ENCODE measurements at regions of chr2 and their contacts with region 1.

Region 1: GRCh38 chr2:85728883-85729824 is 24.6 kb upstream of the ATOH8 start:
- DNase-seq: peak; percentile 80
- ATAC-seq: peak; percentile 88
- H3K4me3 ChIP-seq: no peak overlapping the region
- H3K4me3 Mint-ChIP-seq: no peak overlapping the region
- H3K27ac ChIP-seq: no peak overlapping the region
- H3K27ac Mint-ChIP-seq: no peak overlapping the region
- H3K4me1 ChIP-seq: peaks cover 3 to 7% of the 10 kb centered on the region in 2 donors
- H3K4me1 Mint-ChIP-seq: no peaks in the 10 kb centered on the region
- H3K27me3 ChIP-seq: peaks cover 0 to 10% (median 3%) of the 10 kb centered on the region in 4 experiments
- H3K27me3 Mint-ChIP-seq: peaks cover 23% of the 10 kb centered on the region
- CTCF ChIP-seq: peak; percentile 96

Region 2: DNA sequence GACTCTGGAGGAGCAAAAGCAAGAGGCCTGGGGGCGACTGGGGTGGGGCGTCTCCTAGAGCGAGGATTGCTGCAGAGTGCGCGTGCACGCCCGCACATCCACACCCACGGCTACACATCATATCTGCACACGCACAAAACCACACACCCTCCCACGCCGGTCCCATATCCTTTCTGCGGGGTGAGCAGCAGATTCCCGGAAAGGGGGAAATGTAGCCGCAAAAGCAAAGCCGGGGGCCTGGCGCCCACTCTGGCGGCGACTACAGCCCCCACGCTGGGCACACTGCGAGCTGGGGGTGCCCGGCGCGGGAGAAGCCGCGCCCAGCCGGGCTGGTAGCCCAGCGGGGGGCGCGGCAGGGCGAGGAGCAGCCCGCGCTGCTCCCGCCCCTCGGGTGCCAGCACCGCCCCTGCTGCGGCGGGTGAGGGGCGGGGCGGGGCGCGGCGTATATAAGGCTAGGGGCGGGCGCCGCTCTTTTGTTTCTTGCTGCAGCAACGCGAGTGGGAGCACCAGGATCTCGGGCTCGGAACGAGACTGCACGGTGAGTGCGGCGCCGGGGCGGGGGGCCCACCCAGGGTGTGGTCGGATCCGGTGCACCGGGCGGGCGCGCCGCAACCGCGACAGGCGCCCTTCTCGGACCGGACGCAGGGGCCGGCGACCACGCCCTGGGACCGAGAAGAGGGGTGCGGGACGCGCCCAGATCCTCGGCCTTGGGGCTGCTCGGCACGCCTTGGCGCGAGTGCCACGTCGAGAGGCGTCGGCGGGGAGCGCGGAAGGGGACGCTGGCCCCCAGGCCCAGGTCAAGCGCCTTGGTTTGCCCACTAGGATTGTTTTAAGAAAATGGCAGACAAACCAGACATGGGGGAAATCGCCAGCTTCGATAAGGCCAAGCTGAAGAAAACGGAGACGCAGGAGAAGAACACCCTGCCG is 823.7 kb before region 1 on chr2 and contains the start of gene TMSB10:
- CTCF ChIA-PET with region 1: no interaction called
- POLR2A ChIA-PET with region 1: no interaction called
- intact Hi-C with region 1: no loop called
- DNase-seq: peak; percentile 94
- ATAC-seq: peak; percentile 84
- H3K4me3 ChIP-seq: peak within 1 kb of the TSS; percentile 67 to 98 (median 93)
- H3K4me3 Mint-ChIP-seq: peak within 1 kb of the TSS; percentile 87
- H3K27ac ChIP-seq: peak within 1 kb of the TSS; percentile 77 to 83
- H3K27ac Mint-ChIP-seq: peak within 1 kb of the TSS; percentile 94
- H3K4me1 ChIP-seq: peaks cover 41 to 46% of the 10 kb centered on the region in 2 donors
- H3K4me1 Mint-ChIP-seq: peaks cover 60% of the 10 kb centered on the region
- H3K27me3 ChIP-seq: no peaks in the 10 kb centered on the region
- H3K27me3 Mint-ChIP-seq: no peaks in the 10 kb centered on the region
- CTCF ChIP-seq: peak; percentile 6
- total RNA-seq, gene TMSB10: 868 and 885 TPM in 2 replicates

Region 3: DNA sequence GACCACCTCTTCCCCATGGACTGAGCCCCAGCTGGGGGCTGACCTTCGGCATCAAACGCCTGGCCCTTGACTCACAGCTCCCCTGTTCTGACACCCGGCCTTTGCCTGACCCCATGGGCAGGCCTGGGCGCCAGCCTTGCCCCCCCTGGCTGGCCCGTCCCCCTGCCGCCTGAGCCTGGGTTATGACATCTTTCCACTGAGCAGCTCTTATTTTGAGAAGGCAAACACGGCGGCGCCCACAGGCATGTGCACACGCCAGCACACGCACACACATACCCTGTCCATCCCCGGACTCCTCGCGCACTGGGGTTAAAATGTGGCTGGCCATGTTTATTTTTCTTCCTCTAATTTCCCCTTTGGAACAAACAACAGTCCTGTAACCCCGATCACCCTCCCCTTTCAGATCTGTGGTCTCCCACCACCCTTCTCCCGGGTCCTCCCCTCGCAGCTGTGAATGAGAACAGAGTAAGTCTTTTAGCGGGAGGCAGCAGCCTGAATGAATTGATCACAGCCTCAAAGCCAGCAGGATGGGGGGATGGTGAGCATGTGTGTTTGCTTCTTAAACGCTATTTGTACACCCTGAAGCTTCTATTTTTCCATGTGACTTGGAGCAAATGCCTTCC is 12.8 kb after region 1 on chr2:
- CTCF ChIA-PET with region 1: interaction called, 11 read pairs
- POLR2A ChIA-PET with region 1: no interaction called
- intact Hi-C with region 1: no loop called
- DNase-seq: no peak
- ATAC-seq: no peak
- H3K4me3 ChIP-seq: no peak overlapping the region
- H3K4me3 Mint-ChIP-seq: no peak overlapping the region
- H3K27ac ChIP-seq: no peak overlapping the region
- H3K27ac Mint-ChIP-seq: no peak overlapping the region
- H3K4me1 ChIP-seq: peaks cover 15% of the 10 kb centered on the region in 2 donors
- H3K4me1 Mint-ChIP-seq: peaks cover 20% of the 10 kb centered on the region
- H3K27me3 ChIP-seq: peaks cover 0 to 16% (median 8%) of the 10 kb centered on the region in 4 experiments
- H3K27me3 Mint-ChIP-seq: peaks cover 51% of the 10 kb centered on the region
- CTCF ChIP-seq: no peak

Region 4: GRCh38 chr2:85750587-85751575 is 21.7 kb after region 1 on chr2:
- CTCF ChIA-PET with region 1: interaction called, 13 read pairs
- POLR2A ChIA-PET with region 1: no interaction called
- intact Hi-C with region 1: no loop called
- DNase-seq: peak; percentile 67
- ATAC-seq: peak; percentile 29
- H3K4me3 ChIP-seq: no peak overlapping the region
- H3K4me3 Mint-ChIP-seq: peak overlapping the region; percentile 54
- H3K27ac ChIP-seq: no peak overlapping the region
- H3K27ac Mint-ChIP-seq: no peak overlapping the region
- H3K4me1 ChIP-seq: peaks cover 60 to 64% of the 10 kb centered on the region in 2 donors
- H3K4me1 Mint-ChIP-seq: peaks cover 59% of the 10 kb centered on the region
- H3K27me3 ChIP-seq: peaks cover 0 to 49% (median 21%) of the 10 kb centered on the region in 4 experiments
- H3K27me3 Mint-ChIP-seq: peaks cover 23% of the 10 kb centered on the region
- CTCF ChIP-seq: peak; percentile 70

Region 5: DNA sequence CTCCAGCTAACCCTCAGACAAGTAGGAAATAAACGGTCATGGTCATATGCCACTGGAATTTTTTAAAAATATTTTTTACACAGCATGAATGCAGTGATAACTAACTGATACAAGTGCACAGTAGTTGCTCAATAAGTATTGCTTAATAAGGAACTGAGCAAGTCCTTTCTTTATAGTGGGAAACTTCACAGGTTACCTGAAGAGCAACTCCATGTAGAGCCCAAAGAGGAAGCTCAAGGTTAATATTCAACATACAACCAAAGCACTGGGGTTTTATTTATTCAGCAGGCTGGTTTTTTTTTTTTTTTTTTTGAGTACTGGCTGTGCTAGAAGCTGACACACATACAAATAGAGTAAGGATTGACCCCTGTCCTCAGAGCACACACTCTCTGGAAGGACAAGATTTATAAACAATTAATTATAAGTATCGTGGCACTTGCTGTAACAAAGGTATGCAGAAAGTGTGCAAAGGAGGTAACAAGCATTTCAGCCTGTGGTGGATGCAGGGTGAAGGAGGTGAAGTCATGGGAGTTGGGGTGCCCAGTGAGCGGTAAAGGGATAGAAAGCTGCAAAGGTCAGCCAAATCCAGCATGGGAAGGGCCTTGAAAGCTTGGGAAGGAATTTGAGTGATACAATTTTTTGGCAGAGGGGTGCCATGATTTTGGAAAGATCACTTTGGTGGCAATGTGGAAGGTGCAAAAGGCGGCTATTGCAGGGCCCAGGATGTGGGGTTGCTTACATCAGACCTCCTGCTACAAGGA is 77.4 kb after region 1 on chr2:
- CTCF ChIA-PET with region 1: interaction called, 119 read pairs
- POLR2A ChIA-PET with region 1: no interaction called
- intact Hi-C with region 1: no loop called
- DNase-seq: no peak
- ATAC-seq: no peak
- H3K4me3 ChIP-seq: no peak overlapping the region
- H3K4me3 Mint-ChIP-seq: no peak overlapping the region
- H3K27ac ChIP-seq: no peak overlapping the region
- H3K27ac Mint-ChIP-seq: no peak overlapping the region
- H3K4me1 ChIP-seq: no peaks in the 10 kb centered on the region
- H3K4me1 Mint-ChIP-seq: peaks cover 6% of the 10 kb centered on the region
- H3K27me3 ChIP-seq: peaks cover 0 to 2% (median 1%) of the 10 kb centered on the region in 4 experiments
- H3K27me3 Mint-ChIP-seq: peaks cover 7% of the 10 kb centered on the region
- CTCF ChIP-seq: no peak